Uterus (tissue), 4 donors: ENCODE measurements at regions of chr20 and their contacts with region 1.

Region 1: DNA sequence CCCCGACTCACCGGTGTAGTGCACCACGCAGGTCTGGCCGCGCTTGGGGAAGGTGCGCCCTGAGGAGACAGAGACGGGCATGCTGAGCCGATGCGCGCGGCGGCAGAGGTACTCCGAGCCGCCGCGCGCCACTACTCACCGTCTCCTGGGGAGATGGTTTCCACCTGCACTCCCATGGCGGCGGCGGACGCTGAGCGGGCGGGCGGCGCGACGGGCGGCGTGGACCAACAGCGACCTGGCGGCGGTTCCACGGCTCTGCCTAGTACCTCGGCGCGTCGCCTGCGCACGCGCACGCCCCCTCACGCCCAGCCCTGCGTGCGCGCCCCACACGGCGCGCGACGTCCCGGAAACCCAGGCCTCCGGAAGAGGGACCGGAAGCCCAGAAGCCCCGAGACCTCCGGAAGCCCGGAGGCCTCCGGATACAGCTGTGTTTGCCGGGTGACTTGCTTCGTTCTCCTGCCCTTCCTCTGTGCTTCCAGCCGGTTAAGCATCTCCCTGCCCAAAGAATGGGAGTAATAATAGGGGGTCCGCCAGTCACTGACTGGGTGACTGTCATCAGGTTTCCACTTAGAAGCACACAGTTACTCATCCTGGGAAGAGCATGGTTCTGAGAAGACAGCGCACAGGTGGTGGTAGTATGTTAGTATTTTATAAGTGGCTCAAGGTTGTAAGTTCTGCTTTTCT is at the start of gene FKBP1A:
- DNase-seq: peak; percentile 88 to 94
- H3K4me3 ChIP-seq: peak within 1 kb of the TSS; percentile 59 to 90
- H3K27ac ChIP-seq: peak within 1 kb of the TSS; percentile 88
- H3K4me1 ChIP-seq: peaks cover 5 to 29% of the 10 kb centered on the region in 2 donors
- H3K27me3 ChIP-seq: no peaks in the 10 kb centered on the region
- CTCF ChIP-seq: peak in 2 of 4 experiments; percentile 42 to 48
- POLR2A ChIP-seq: peak; percentile 83 to 93
- total RNA-seq, gene FKBP1A: 99.5 to 253 (median 206) TPM

Region 2: GRCh38 chr20:1324598-1325172 is 68.3 kb before region 1 on chr20:
- intact Hi-C with region 1: loop called (anchors 5 kb)
- DNase-seq: peak in 1 of 2 donors; percentile 56
- H3K4me3 ChIP-seq: peak overlapping the region; percentile 66 to 87
- H3K27ac ChIP-seq: peak overlapping the region; percentile 98 to 100
- H3K4me1 ChIP-seq: peaks cover 21 to 22% of the 10 kb centered on the region in 2 donors
- H3K27me3 ChIP-seq: no peaks in the 10 kb centered on the region
- CTCF ChIP-seq: no peak
- POLR2A ChIP-seq: no peak

Region 3: DNA sequence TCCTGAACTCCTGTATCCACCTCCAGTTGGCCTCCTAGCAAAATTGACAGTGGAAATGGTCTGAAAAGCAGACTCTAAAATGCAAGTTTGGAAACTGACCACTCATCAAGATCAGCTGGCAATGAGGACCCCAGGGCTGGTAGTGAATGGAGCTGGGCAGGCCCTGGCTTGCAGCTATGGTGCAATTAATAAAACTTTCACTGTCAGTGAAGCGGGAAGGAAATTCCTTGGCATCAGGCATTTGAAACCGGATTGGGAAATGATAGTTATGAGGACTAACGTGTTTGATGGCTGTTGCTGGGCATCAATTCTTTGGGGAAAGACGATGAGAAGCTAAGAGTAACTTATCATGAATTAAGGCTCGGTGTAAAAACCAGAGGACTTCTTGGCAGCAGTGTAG is 207.8 kb after region 1 on chr20:
- intact Hi-C with region 1: no loop called
- DNase-seq: no peak
- H3K4me3 ChIP-seq: no peak overlapping the region
- H3K27ac ChIP-seq: no peak overlapping the region
- H3K4me1 ChIP-seq: no peaks in the 10 kb centered on the region
- H3K27me3 ChIP-seq: no peaks in the 10 kb centered on the region
- CTCF ChIP-seq: no peak
- POLR2A ChIP-seq: no peak

Region 4: DNA sequence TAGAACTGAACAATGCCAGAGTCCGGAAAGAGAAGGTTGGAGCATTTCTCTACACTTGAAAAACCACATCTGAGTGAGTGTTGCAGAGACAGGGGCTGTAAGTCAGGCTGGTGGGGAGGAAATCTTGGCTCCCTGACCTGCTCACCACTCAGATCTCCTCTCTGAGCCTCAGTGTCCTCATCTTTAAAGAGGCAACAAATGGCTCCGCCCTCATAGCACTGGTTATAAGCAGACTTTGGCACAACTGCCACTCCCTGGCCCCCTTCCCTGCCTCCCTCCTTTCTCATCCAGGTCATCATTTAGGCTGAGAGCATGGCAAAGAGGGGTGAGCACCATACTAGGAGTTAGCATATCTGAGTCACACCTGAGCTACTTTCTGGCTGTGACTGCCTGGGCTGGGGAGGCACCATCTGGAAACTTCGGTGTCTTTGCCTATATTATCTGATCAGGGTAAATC is 254.0 kb after region 1 on chr20:
- intact Hi-C with region 1: no loop called
- DNase-seq: no peak
- H3K4me3 ChIP-seq: no peak overlapping the region
- H3K27ac ChIP-seq: no peak overlapping the region
- H3K4me1 ChIP-seq: no peaks in the 10 kb centered on the region
- H3K27me3 ChIP-seq: no peaks in the 10 kb centered on the region
- CTCF ChIP-seq: no peak
- POLR2A ChIP-seq: no peak